Ovary (tissue), 10 donors: ENCODE measurements at regions of chr15 and their contacts with region 1.

Region 1: DNA sequence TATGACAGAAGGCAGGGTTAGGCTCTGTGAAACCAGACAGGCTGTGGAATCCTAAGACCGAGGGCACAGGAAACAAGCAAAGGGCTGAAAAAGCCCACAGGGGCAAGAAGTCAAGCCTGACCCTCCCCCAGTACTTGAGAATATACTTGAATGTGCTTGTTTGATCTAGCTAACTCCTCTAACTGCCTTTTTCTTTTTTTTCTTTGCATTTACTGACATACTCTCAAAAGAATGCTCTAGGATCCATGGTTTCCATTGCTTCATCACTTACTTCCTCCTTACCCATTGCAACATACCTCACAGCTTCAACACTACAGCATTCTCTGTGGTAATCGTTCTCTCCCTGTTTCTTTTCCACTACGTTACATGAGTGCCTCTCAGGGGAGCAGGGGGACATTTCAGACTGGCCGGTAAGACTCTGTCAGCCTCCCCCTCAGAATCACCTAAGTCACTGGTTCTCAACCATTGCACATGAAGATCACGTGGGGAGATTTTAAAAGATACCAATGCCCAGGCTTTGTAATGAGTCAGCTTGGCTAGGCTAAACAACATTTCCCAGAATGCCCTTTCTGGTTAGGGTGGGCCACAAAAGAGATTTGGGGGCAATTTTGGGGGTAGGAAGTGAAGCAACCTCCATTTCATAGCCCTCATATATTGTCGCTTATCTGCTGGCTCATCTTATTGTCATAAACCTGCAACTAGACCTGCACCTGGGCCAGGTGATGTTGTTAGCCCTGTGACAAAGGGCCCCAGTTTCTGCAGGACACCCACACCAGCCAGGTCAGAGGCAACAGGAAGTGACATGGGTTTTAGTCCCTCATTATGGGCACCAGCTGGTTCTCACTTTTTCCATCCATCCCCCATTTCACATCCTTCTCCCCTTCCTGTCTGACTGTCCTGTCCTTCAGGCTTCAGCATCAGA is 24.6 kb upstream of the RSL24D1 start:
- DNase-seq: no peak
- H3K4me3 ChIP-seq: no peak overlapping the region
- H3K27ac ChIP-seq: no peak overlapping the region
- H3K4me1 ChIP-seq: no peaks in the 10 kb centered on the region
- H3K27me3 ChIP-seq: no peaks in the 10 kb centered on the region
- CTCF ChIP-seq: no peak
- EP300 ChIP-seq: no peak
- POLR2A ChIP-seq: no peak

Region 2: GRCh38 chr15:55247766-55248427 is 26.5 kb after region 1 on chr15:
- intact Hi-C with region 1: loop called in 1 of 4 experiments (anchors 1 kb)
- DNase-seq: no peak
- H3K4me3 ChIP-seq: no peak overlapping the region
- H3K27ac ChIP-seq: no peak overlapping the region
- H3K4me1 ChIP-seq: no peaks in the 10 kb centered on the region
- H3K27me3 ChIP-seq: no peaks in the 10 kb centered on the region
- CTCF ChIP-seq: no peak
- EP300 ChIP-seq: no peak
- POLR2A ChIP-seq: no peak

Region 3: DNA sequence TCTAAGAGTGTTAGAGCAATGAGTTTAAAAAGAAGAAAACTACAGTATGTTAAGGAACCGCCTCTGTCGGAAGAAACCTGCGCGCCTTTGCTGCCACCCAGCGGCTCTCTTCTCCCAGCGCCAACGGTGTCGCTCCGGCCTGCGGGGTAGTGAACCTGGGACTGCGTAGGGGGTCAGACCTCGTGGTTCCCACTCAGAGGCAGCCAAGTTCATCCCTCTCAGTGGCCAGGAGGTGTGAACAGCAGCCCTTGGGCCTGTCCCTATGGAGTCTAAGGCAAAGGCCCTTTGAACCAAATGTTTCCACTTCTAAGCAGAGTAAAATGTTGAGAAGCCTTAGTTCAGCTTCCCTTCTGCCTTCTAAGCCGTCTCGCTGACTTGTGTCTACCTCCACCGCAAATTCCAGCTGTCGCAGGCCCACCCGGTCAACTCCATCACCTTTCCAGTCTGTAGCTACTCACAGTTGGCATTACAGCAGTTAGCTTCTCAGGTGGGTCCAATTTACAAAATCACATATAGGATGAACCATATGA is 69.2 kb after region 1 on chr15:
- intact Hi-C with region 1: loop called in 3 of 4 experiments (anchors 2 to 10 kb)
- DNase-seq: peak; percentile 80 to 90 (median 85)
- H3K4me3 ChIP-seq: peak overlapping the region; percentile 86
- H3K27ac ChIP-seq: peak overlapping the region; percentile 42 to 80
- H3K4me1 ChIP-seq: peaks cover 3% of the 10 kb centered on the region
- H3K27me3 ChIP-seq: no peaks in the 10 kb centered on the region
- CTCF ChIP-seq: peak; percentile 64 to 69 (median 68)
- EP300 ChIP-seq: no peak
- POLR2A ChIP-seq: no peak

Region 4: DNA sequence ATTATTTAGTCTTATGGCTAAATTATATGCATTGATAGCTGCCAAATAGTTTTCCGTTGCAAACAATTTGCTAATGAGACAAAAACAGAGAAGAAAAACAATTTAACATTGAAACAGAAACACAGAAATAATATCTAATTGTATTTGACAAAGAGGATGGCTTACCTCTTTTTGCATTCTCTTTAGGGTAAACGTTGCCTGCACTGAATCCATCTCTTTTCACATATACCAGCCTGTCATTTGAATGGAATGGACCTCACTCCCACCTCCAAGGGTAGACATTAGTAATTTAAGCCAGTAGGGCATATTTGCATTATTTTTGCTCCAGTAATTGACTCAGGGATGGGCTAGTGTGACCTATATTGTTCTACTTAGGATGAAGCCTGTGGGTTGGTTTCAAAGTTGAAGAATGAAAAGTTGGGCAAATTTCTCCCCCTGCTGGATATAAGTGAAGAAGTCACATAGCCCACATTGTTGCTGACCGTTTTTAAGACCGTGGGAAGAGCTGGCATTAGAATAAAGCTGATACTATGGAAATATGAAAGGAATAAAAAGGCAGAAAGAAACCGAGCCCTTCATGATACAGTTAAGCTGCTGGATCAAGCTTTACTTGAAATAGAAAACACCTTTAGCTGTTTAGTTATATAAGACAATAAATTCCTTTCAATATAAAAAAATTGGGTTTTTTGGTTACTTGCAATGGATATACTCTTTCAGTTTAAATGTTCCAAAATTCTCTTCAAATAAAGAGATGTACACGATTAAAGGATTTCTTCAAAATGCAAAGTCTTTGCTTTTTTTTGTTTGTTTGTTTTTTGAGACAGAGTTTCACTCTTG is 213.9 kb after region 1 on chr15:
- intact Hi-C with region 1: loop called in 1 of 4 experiments (anchors 5 kb)
- DNase-seq: no peak
- H3K4me3 ChIP-seq: no peak overlapping the region
- H3K27ac ChIP-seq: no peak overlapping the region
- H3K4me1 ChIP-seq: no peaks in the 10 kb centered on the region
- H3K27me3 ChIP-seq: no peaks in the 10 kb centered on the region
- CTCF ChIP-seq: no peak
- EP300 ChIP-seq: no peak
- POLR2A ChIP-seq: no peak